ENCODE measurements at regions of chr6 and their contacts with region 1.

Region 1: DNA sequence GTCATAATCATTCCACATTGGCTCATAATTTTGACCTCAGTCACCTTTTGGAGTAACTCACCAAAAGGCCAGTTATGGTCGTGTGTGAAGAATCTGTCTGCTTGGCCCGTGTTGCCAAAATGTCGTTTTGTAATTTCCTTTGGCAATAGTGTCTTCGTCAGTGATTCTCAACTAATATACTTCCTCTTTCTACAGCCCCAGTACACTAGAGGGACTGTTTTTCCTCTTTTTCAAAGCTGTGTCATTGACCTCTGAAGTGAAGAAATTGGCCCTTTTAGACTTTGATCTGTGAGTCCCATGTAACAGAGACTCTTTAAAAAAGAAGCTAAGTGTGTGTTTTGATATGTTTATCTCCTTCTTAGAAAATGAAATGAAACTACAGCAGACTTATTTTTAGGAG is 5.2 kb downstream of the FOXO3 start:
- DNase-seq: no peak
- H3K4me3 Mint-ChIP-seq: no peak overlapping the region
- H3K27ac Mint-ChIP-seq: no peak overlapping the region
- H3K4me1 Mint-ChIP-seq: peaks cover 52% of the 10 kb centered on the region
- H3K27me3 Mint-ChIP-seq: peaks cover 10% of the 10 kb centered on the region

Region 2: DNA sequence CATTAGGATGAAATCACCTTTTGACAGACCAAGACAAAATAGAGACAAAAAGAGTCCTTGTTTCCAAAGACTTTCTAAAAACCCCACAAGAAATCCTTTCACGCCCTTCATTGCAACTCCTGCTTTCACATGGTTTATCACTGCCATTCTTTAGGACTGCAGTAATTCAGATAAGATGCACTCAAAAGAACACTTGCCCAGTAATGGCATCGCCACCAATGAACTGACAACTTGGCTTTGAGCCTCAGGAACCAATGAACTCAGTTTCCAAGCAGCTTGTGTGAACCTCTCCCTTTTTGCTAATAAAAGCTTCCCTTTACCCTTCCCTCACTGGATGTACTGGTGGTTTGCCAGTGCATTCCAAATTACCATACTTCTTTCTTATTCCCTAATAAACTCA is 513.2 kb before region 1 on chr6:
- CTCF ChIA-PET with region 1: no interaction called
- intact Hi-C with region 1: no loop called
- DNase-seq: no peak
- H3K4me3 Mint-ChIP-seq: no peak overlapping the region
- H3K27ac Mint-ChIP-seq: no peak overlapping the region
- H3K4me1 Mint-ChIP-seq: no peaks in the 10 kb centered on the region
- H3K27me3 Mint-ChIP-seq: no peaks in the 10 kb centered on the region

Region 3: GRCh38 chr6:108581237-108581931 is 15.5 kb after region 1 on chr6:
- CTCF ChIA-PET with region 1: interaction called, 5 read pairs
- intact Hi-C with region 1: loop called (anchors 2 kb)
- DNase-seq: no peak
- H3K4me3 Mint-ChIP-seq: no peak overlapping the region
- H3K27ac Mint-ChIP-seq: no peak overlapping the region
- H3K4me1 Mint-ChIP-seq: peaks cover 54% of the 10 kb centered on the region
- H3K27me3 Mint-ChIP-seq: no peaks in the 10 kb centered on the region

Region 4: DNA sequence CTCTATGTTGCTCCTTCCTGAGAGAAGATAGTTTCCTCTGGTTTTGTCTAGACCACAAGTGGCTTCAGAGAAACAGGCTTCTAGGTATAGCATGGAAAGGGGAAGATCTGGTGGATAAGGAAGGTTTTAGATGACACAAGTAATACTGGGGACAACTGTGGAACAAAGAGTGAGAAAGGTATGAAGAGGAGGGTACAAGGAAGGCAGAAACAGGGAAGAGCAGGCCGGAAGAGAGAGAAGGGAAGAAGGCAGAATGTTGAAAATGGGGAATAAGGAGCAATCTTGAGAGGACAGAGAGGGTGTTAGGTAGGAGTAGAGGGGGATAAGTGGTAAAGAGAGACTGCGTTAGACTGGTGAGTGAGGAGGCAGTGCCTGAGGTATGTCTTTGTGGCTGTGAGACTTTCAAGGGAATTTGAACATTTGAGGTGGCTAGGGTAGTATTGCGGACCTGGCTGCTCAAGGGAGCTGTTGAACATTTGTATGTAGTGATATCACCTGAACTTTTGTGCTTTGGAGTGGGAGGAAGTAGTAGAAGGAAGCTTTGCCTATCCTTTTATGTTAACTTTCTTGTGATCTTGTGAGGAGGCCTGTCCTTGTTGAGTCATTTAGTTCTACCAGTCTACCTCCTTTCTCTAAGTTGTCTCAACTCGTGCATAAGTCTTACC is 64.3 kb after region 1 on chr6:
- CTCF ChIA-PET with region 1: interaction called, 3 read pairs
- intact Hi-C with region 1: loop called (anchors 1 kb)
- DNase-seq: peak; percentile 37
- H3K4me3 Mint-ChIP-seq: no peak overlapping the region
- H3K27ac Mint-ChIP-seq: peak overlapping the region; percentile 35
- H3K4me1 Mint-ChIP-seq: peaks cover 45% of the 10 kb centered on the region
- H3K27me3 Mint-ChIP-seq: no peaks in the 10 kb centered on the region

Region 5: DNA sequence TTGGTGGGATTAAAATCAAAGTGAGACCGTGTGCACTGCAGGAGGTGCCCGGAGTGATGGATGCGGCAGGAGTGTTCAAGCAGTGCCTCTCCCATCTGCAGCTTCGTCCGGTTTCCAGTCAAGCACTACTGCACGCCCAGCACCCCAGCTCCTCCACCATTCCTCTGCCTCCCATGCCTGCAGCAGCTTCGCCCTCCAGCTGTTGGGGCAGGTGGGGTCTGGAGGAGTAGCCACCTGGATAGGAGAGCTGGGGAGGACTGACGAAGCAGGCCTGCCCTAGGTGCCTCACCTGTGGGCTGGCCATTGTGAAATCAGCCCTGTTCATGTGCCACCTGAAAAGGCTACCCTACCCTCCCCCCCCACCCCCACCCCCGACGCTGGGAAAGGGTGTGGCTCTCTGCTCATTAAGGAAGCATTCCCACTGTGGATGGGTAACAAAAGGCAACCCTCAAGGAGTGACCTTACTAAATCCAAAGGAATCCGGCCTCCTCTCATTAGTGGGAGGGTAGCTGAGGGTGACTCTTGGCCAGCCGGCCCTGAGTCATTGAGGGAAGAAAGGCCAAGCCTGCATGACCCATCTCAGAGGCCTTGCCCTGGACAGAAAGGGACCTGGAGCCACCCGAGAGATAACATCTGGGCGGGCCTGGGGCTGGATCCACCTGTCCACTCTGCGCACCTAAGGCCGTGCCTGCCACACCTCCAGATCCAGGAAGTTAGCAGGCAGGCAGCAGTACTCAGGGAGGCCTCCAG is 166.4 kb after region 1 on chr6:
- CTCF ChIA-PET with region 1: no interaction called
- intact Hi-C with region 1: no loop called
- DNase-seq: no peak
- H3K4me3 Mint-ChIP-seq: no peak overlapping the region
- H3K27ac Mint-ChIP-seq: no peak overlapping the region
- H3K4me1 Mint-ChIP-seq: no peaks in the 10 kb centered on the region
- H3K27me3 Mint-ChIP-seq: peaks cover 2% of the 10 kb centered on the region

Measured in activated naive CD4-positive, alpha-beta T cell treated with anti-CD3 and anti-CD28 coated beads for 36 hours (primary cell).